Heart right ventricle (tissue), 16 donors: ENCODE measurements at regions of chr9 and their contacts with region 1.

Region 1: DNA sequence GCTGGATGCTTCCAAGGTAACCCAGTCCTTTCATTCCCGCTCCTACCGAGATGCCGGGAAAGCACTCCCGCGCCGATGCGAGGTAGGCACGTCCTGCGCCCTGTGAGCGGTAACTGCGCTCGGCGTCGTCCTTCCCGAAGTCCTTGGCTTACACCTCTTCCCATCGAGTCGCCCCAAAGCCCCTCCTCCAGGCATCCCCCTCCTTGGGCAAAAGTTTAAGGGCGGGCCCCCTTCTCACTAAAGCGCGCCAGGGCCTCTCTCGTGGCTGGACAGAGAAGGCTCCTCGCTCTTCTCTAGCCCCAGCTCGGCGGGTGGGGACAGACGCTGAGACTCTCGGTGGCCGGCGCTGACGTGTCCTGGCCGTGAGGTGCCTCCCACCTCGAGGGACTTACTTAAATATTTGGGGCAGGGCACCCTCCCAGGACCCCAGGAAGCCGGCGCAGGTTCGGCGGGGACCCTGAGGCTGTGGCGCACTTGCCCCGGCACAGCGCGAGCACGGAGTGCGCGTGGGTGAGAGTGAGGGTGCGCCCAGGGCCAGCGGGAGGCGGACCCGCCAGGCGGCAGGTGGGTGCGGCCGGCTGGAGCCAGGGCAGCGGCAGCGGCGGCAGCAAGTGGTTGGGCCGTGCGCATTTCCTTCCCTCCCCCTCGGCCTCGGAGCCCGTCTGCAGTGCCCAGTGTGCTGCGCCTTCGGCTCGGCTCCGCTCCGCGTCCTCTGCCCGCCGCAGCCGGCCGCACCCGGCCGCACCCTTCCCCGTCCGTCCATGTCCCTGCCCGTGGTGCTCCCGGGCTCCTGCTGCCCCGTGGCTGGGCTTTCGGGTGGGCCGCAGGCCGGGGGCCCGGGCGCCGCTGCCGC is at the start of gene ENTREP1:
- DNase-seq: peak; percentile 64 to 77
- ATAC-seq: peak; percentile 88 to 97 (median 92)
- H3K4me3 ChIP-seq: peak within 1 kb of the TSS; percentile 49 to 79 (median 62)
- H3K27ac ChIP-seq: peak within 1 kb of the TSS; percentile 64 to 95 (median 83)
- H3K4me1 ChIP-seq: peaks cover 0 to 27% (median 10%) of the 10 kb centered on the region in 9 donors
- H3K27me3 ChIP-seq: peaks cover 0 to 53% (median 0%) of the 10 kb centered on the region in 7 donors
- CTCF ChIP-seq: peak in 4 of 9 donors; percentile 19 to 52 (median 44)
- total RNA-seq, gene ENTREP1: 23.4 to 40.5 (median 26.6) TPM

Region 2: DNA sequence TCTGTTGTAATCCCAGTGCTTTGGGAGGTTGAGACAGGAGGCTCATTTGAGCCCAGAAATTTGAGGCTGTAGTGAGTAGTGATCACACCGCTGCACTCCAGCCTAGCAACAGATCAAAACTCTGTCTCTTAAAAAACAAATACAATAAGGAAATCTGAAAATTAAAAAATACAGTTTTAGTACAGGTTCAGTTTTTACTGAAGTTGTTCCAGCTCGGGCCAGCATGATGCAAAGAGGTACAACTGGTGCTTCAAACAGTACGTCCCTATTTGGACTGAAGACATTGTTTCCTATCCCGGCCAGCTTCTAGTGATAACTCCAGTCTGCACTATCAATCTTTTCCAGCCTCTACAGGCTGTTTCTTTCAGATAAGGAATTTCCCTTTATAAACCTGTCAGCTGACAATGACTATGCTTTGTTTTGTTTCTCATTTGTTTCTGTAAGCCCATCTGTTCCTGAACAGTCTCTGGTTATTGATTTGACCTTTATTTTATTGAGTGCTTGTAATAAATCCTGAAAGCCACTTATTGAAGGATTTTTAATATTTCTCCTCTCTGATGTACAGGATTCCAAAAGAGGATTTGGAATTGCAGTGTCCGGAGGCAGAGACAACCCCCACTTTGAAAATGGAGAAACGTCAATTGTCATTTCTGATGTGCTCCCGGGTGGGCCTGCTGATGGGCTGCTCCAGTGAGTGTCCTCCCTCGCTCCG is 108.8 kb before region 1 on chr9:
- intact Hi-C with region 1: loop called in 1 of 10 experiments (anchors 10 kb)
- DNase-seq: peak in 1 of 2 donors; percentile 40
- ATAC-seq: peak; percentile 63 to 93 (median 84)
- H3K4me3 ChIP-seq: no peak overlapping the region
- H3K27ac ChIP-seq: peak overlapping the region; percentile 67 to 93 (median 83)
- H3K4me1 ChIP-seq: peaks cover 0 to 60% (median 28%) of the 10 kb centered on the region in 9 donors
- H3K27me3 ChIP-seq: no peaks in the 10 kb centered on the region
- CTCF ChIP-seq: no peak

Region 3: DNA sequence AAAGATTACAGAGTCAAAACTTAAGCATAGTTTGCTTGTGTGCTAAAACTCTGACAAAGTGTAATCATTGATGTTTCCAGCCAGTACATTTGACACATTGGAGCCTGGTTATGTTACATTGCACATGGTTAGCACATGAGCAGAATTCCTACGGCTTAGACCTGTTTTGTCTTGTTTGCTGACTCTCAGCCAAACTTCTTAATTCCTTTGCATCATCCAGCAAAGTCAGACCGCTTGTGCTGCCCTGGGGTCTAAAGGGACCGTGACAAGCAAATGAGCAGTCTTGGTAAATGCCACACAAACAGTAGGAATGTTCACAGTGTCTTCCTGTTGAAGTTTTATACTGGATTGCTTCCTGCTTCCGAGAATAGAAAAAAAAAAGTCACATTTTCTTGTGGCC is 71.7 kb before region 1 on chr9:
- intact Hi-C with region 1: loop called in 2 of 10 experiments (anchors 5 to 10 kb)
- DNase-seq: no peak
- ATAC-seq: peak in 6 of 8 donors; percentile 15 to 45 (median 36)
- H3K4me3 ChIP-seq: no peak overlapping the region
- H3K27ac ChIP-seq: peak overlapping the region in 8 of 10 donors; percentile 12 to 77 (median 58)
- H3K4me1 ChIP-seq: peaks cover 0 to 35% (median 23%) of the 10 kb centered on the region in 9 donors
- H3K27me3 ChIP-seq: no peaks in the 10 kb centered on the region
- CTCF ChIP-seq: no peak

Region 4: GRCh38 chr9:69273161-69273560 is 51.6 kb before region 1 on chr9:
- intact Hi-C with region 1: loop called in 1 of 10 experiments (anchors 5 kb)
- DNase-seq: peak in 1 of 2 donors; percentile 52
- ATAC-seq: peak; percentile 83 to 99 (median 94)
- H3K4me3 ChIP-seq: peak overlapping the region in 2 of 10 donors; percentile 14 to 18
- H3K27ac ChIP-seq: peak overlapping the region; percentile 50 to 88 (median 80)
- H3K4me1 ChIP-seq: peaks cover 0 to 19% (median 9%) of the 10 kb centered on the region in 9 donors
- H3K27me3 ChIP-seq: no peaks in the 10 kb centered on the region
- CTCF ChIP-seq: no peak

Region 5: GRCh38 chr9:69385581-69386033 is 60.8 kb after region 1 on chr9:
- intact Hi-C with region 1: loop called in 3 of 10 experiments (anchors 5 to 10 kb)
- DNase-seq: no peak
- ATAC-seq: peak in 1 of 8 donors; percentile 27
- H3K4me3 ChIP-seq: no peak overlapping the region
- H3K27ac ChIP-seq: no peak overlapping the region
- H3K4me1 ChIP-seq: peaks cover 4 to 50% (median 12%) of the 10 kb centered on the region in 9 donors
- H3K27me3 ChIP-seq: no peaks in the 10 kb centered on the region
- CTCF ChIP-seq: no peak

Region 6: GRCh38 chr9:69397384-69398214 is 72.8 kb after region 1 on chr9:
- intact Hi-C with region 1: loop called in 2 of 10 experiments (anchors 5 to 10 kb)
- DNase-seq: no peak
- ATAC-seq: peak; percentile 35 to 67 (median 44)
- H3K4me3 ChIP-seq: peak overlapping the region in 1 of 10 donors; percentile 14
- H3K27ac ChIP-seq: peak overlapping the region in 9 of 10 donors; percentile 58 to 83 (median 72)
- H3K4me1 ChIP-seq: peaks cover 0 to 28% (median 13%) of the 10 kb centered on the region in 9 donors
- H3K27me3 ChIP-seq: no peaks in the 10 kb centered on the region
- CTCF ChIP-seq: no peak

Region 7: GRCh38 chr9:69433392-69433791 is 108.6 kb after region 1 on chr9:
- intact Hi-C with region 1: no loop called
- DNase-seq: no peak
- ATAC-seq: no peak
- H3K4me3 ChIP-seq: no peak overlapping the region
- H3K27ac ChIP-seq: no peak overlapping the region
- H3K4me1 ChIP-seq: no peaks in the 10 kb centered on the region
- H3K27me3 ChIP-seq: no peaks in the 10 kb centered on the region
- CTCF ChIP-seq: no peak